ENCODE measurements at regions of chr5 and their contacts with region 1.

Region 1: DNA sequence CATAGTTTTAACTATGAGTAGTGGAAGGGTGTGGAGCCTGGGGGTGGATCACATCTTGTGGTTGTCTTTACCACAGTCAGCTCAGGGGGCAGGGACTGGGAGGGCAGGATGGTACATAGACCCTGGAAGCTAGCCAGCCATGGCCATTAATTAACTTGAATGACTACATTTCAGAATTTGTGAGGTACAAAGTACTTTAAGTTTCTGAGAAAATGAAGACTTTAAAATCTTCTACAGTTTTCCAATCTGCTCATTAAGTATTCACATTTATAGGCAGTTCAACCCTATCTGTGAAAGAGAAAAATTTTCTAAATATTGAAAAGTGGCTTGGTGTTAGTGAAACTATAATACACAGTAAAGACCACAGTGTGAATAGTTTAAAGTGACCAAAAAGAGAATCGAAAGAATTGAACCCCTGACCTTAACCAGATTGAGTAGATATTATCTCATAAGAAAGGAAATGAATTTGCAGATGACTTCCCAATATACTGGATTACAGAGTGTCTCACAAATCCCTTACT is 234.2 kb upstream of the MEF2C start:
- DNase-seq: peak; percentile 66
- H3K4me3 ChIP-seq: no peak overlapping the region
- H3K27ac ChIP-seq: no peak overlapping the region
- H3K4me1 ChIP-seq: no peaks in the 10 kb centered on the region
- H3K27me3 ChIP-seq: no peaks in the 10 kb centered on the region
- CTCF ChIP-seq: no peak

Region 2: GRCh38 chr5:88940713-88941112 is 176.5 kb before region 1 on chr5:
- CTCF ChIA-PET with region 1: no interaction called
- dilution Hi-C with region 1: no loop called
- in situ Hi-C with region 1: no loop called
- intact Hi-C with region 1: no loop called
- DNase-seq: no peak
- H3K4me3 ChIP-seq: no peak overlapping the region
- H3K27ac ChIP-seq: no peak overlapping the region
- H3K4me1 ChIP-seq: no peaks in the 10 kb centered on the region
- H3K27me3 ChIP-seq: peaks cover 8% of the 10 kb centered on the region
- CTCF ChIP-seq: no peak

Region 3: GRCh38 chr5:89086390-89087086 is 30.6 kb before region 1 on chr5:
- CTCF ChIA-PET with region 1: no interaction called
- dilution Hi-C with region 1: no loop called
- in situ Hi-C with region 1: no loop called
- intact Hi-C with region 1: loop called (anchors 1 kb)
- DNase-seq: no peak
- H3K4me3 ChIP-seq: no peak overlapping the region
- H3K27ac ChIP-seq: no peak overlapping the region
- H3K4me1 ChIP-seq: no peaks in the 10 kb centered on the region
- H3K27me3 ChIP-seq: peaks cover 2% of the 10 kb centered on the region
- CTCF ChIP-seq: no peak

Region 4: GRCh38 chr5:89399548-89399947 is 282.4 kb after region 1 on chr5:
- CTCF ChIA-PET with region 1: no interaction called
- dilution Hi-C with region 1: no loop called
- in situ Hi-C with region 1: no loop called
- intact Hi-C with region 1: no loop called
- DNase-seq: peak; percentile 24
- H3K4me3 ChIP-seq: no peak overlapping the region
- H3K27ac ChIP-seq: no peak overlapping the region
- H3K4me1 ChIP-seq: no peaks in the 10 kb centered on the region
- H3K27me3 ChIP-seq: peaks cover 2% of the 10 kb centered on the region
- CTCF ChIP-seq: no peak